Mammary epithelial cell (primary cell): ENCODE measurements at regions of chr1 and their contacts with region 1.

Region 1: GRCh38 chr1:205849619-205850355 is at the start of gene PM20D1:
- DNase-seq: no peak
- H3K4me3 ChIP-seq: no peak within 1 kb of the TSS
- H3K27ac ChIP-seq: no peak within 1 kb of the TSS
- H3K4me1 ChIP-seq: no peaks in the 10 kb centered on the region
- H3K27me3 ChIP-seq: no peaks in the 10 kb centered on the region
- CTCF ChIP-seq: no peak
- total RNA-seq, gene PM20D1: not detected

Region 2: DNA sequence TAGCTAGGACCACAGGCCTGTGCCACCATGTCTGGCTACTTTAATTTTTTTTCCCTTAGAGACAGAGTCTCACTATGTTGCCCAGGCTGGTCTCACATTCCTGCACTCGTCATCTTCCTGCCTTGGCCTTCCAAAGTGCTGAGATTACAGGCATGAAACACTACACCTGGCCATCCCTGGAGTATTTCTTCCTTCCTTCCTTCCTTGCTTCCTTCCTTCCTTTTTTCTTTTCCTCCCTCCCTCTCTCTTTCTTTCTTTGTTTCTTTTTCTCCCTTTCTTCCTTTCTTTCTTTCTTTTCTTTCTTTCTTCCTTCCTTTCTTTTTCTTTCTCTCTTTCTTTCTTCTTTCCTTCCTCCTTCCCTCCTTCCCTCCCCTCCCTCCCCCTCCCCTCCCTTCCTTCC is 46.5 kb after region 1 on chr1:
- CTCF ChIA-PET with region 1: no interaction called
- dilution Hi-C with region 1: loop called (anchors 5 kb)
- in situ Hi-C with region 1: no loop called
- intact Hi-C with region 1: no loop called
- DNase-seq: no peak
- H3K4me3 ChIP-seq: no peak overlapping the region
- H3K27ac ChIP-seq: no peak overlapping the region
- H3K4me1 ChIP-seq: no peaks in the 10 kb centered on the region
- H3K27me3 ChIP-seq: no peaks in the 10 kb centered on the region
- CTCF ChIP-seq: no peak